WTC11 (cell line): ENCODE measurements at regions of chr19 and their contacts with region 1.

Region 1: DNA sequence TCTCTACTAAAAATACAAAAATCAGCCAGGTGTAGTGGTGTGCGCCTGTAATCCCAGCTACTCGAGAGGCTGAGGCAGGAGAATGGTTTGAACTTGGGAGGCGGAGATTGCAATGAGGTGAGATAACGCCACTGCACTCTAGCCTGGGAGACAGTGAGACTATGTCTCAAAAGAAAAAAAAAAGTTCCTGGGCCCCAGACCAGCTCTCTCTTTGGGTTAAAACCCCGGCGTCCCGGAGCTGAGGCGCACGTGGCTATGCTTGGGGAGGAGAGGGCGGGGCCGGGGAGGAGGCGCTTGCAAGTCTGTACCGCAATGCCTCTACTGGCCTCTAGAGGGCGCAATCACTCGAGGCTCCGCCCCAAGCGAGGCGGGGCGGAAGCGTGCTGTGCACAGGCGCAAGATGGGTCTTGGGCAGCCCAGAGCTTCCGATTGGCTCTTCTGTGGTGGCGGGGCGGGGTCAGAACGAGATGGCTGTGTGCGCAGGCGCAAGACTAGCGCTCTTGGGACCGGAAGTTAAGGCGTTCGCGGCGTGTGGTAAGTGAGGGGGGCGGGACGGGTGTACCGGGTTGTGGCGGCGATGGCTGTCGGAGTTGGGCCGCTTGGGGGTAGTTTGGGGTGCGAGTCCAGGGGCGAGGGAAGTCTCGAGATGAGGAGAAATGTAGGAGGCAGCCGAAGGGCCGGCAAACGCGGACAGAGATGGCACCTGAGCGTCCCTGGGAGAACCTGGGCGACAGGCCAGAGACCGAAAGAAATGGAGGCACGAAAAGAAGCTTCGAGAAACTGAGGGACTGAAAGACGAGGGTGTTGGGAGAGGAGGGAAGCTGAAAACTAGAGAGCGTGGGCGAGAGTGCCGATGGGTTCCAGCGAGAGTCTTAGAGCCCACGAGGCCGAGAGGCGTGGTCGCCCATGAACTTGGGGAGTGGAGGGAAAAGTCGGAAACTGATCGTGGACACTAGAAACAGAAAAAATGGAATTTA is at the start of gene DHX34:
- DNase-seq: peak; percentile 99
- ATAC-seq: peak; percentile 97
- H3K4me3 Mint-ChIP-seq: peak within 1 kb of the TSS; percentile 92
- H3K27ac Mint-ChIP-seq: peak within 1 kb of the TSS; percentile 86
- H3K4me1 Mint-ChIP-seq: peaks cover 29% of the 10 kb centered on the region
- H3K27me3 Mint-ChIP-seq: peaks cover 14% of the 10 kb centered on the region
- CTCF ChIP-seq: peak; percentile 99
- total RNA-seq, gene DHX34: 35.6 to 36.5 TPM (median 35.6 TPM) in 3 replicates

Region 2: DNA sequence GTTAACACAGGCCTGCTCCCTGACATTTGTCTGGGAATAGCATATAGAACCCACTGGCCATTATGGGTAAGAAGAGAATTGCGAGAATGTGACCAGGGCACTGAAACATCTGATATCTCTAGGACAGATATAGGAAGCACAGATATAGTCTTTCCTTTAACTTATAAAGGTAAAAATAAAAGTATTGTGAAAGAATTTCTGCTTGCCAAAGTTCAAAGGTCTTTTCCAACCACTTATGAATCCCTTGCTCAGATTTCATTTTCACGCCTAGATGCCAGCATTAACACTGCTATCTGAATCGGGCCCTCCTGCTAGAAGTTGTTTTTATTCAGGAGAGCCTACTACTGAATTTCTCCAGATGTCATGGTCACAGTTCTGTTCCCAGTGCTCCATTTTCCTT is 145.9 kb before region 1 on chr19:
- CTCF ChIA-PET with region 1: no interaction called
- POLR2A ChIA-PET with region 1: no interaction called
- DNase-seq: no peak
- ATAC-seq: no peak
- H3K4me3 Mint-ChIP-seq: no peak overlapping the region
- H3K27ac Mint-ChIP-seq: peak overlapping the region; percentile 93
- H3K4me1 Mint-ChIP-seq: no peaks in the 10 kb centered on the region
- H3K27me3 Mint-ChIP-seq: no peaks in the 10 kb centered on the region
- CTCF ChIP-seq: no peak

Region 3: DNA sequence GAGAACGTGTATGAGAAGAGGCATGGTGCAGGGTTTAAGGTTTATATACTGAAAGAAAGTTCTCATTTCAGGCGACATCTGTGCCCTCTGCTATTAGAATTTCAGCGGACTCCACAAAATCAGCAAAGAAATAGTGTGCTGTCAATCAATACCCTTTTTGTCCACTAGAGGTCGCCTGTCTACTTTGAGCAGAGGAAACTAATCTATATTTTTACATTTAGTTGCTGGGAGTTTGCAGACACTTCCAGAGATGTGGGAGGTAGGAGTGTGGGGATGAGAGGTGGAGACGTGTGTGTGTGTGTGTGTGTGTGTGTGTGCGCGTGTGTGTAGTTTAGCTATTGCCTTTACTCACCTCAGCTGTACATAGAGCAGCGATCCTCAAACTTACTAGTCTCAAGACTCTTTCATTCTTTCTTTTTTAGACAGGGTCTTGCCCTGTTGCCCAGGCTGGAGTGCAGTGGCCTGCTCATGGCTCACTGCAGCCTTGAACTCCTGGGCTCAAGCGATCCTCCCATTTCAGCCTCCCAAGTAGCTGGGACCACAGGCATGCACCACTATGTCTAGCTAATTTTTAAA is 64.7 kb before region 1 on chr19:
- CTCF ChIA-PET with region 1: interaction called, 13 read pairs
- POLR2A ChIA-PET with region 1: no interaction called
- DNase-seq: no peak
- ATAC-seq: peak; percentile 54
- H3K4me3 Mint-ChIP-seq: no peak overlapping the region
- H3K27ac Mint-ChIP-seq: no peak overlapping the region
- H3K4me1 Mint-ChIP-seq: peaks cover under 1% of the 10 kb centered on the region
- H3K27me3 Mint-ChIP-seq: no peaks in the 10 kb centered on the region
- CTCF ChIP-seq: peak; percentile 85

Region 4: DNA sequence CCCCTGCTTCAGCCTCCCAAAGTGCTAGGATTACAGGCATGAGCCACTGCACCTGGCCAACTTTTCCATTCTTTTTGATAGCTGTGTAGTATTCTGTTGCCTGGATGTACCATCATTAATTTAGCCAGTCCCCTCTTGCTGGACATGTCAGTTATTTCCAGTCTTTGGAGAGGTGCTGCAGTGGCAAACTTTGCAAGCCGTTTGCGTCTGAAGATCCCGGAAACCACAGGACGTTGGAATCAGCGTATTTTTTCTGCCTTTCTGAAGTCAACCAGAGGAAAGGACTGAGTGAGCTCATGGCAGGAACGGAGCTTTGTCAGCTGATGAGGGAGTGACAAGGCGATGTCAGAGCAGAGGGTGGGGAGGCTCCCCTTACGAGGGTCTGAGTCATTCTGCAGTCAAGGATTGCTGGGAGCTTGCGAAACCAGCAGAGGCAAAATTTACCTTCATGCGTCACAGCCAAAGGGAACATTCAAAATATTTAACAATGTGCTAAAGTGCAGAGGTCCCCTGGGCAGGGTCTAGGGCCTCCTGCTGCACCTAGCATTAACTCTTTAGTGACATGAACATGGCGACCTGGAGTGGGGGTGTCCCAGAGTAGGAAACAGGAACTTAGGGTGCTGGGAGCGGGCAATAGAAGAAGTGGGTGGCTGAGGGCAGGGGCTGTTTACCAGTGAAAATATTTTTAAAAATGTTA is 33.8 kb before region 1 on chr19:
- CTCF ChIA-PET with region 1: interaction called, 22 read pairs
- POLR2A ChIA-PET with region 1: no interaction called
- DNase-seq: no peak
- ATAC-seq: no peak
- H3K4me3 Mint-ChIP-seq: no peak overlapping the region
- H3K27ac Mint-ChIP-seq: peak overlapping the region; percentile 15
- H3K4me1 Mint-ChIP-seq: peaks cover 5% of the 10 kb centered on the region; the same call in 1 of the 2 replicates
- H3K27me3 Mint-ChIP-seq: peaks cover 11% of the 10 kb centered on the region; the same call in 1 of the 2 replicates
- CTCF ChIP-seq: no peak

Region 5: DNA sequence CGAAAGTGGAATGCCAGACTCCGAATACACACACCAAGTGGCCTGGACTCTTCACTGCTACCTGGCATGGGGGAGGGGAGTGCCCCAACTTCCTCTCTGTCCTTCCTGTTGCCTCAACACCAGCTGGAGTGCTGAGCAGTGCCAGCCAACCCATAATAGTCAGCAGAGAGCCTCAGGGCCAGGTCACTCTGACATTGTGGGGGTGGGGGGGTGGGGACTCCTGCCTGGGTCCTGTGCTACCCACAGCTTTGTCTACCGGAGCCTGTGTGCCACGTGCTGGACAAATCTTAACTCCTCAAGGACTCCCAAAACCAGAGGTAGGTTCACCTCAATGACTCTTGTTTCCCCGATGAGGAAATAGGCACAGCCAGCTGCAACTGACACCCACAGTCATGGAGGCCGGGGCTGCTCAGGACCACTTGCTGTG is 12.2 kb before region 1 on chr19:
- CTCF ChIA-PET with region 1: interaction called, 61 read pairs
- POLR2A ChIA-PET with region 1: interaction called, 5 read pairs
- DNase-seq: no peak
- ATAC-seq: peak; percentile 63
- H3K4me3 Mint-ChIP-seq: no peak overlapping the region
- H3K27ac Mint-ChIP-seq: peak overlapping the region; percentile 4
- H3K4me1 Mint-ChIP-seq: peaks cover 5% of the 10 kb centered on the region
- H3K27me3 Mint-ChIP-seq: peaks cover 4% of the 10 kb centered on the region; the same call in 1 of the 2 replicates
- CTCF ChIP-seq: no peak

Region 6: GRCh38 chr19:47414469-47414868 is 65.4 kb after region 1 on chr19:
- CTCF ChIA-PET with region 1: interaction called, 10 read pairs
- POLR2A ChIA-PET with region 1: interaction called, 3 read pairs
- DNase-seq: peak; percentile 73
- ATAC-seq: peak; percentile 59
- H3K4me3 Mint-ChIP-seq: no peak overlapping the region
- H3K27ac Mint-ChIP-seq: no peak overlapping the region; the same call in 1 of the 2 replicates
- H3K4me1 Mint-ChIP-seq: peaks cover 28% of the 10 kb centered on the region
- H3K27me3 Mint-ChIP-seq: peaks cover 39% of the 10 kb centered on the region
- CTCF ChIP-seq: 0 out of 2 replicates have a peak, but pooled peaks have one; percentile 26